CD8-positive, alpha-beta T cell (primary cell): ENCODE measurements at regions of chr2 and their contacts with region 1.

Region 1: GRCh38 chr2:234463626-234464290 is 33.1 kb downstream of the ARL4C start:
- DNase-seq: peak; percentile 58 to 92 (median 75)
- ATAC-seq: peak; percentile 87
- H3K4me3 ChIP-seq: peak overlapping the region; percentile 9 to 36
- H3K4me3 Mint-ChIP-seq: peak overlapping the region; percentile 50
- H3K27ac ChIP-seq: peak overlapping the region; percentile 85 to 94
- H3K27ac Mint-ChIP-seq: peak overlapping the region; percentile 94
- H3K4me1 ChIP-seq: peaks cover 63% of the 10 kb centered on the region
- H3K4me1 Mint-ChIP-seq: peaks cover 67% of the 10 kb centered on the region
- H3K27me3 ChIP-seq: no peaks in the 10 kb centered on the region
- H3K27me3 Mint-ChIP-seq: no peaks in the 10 kb centered on the region
- CTCF ChIP-seq: no peak

Region 2: DNA sequence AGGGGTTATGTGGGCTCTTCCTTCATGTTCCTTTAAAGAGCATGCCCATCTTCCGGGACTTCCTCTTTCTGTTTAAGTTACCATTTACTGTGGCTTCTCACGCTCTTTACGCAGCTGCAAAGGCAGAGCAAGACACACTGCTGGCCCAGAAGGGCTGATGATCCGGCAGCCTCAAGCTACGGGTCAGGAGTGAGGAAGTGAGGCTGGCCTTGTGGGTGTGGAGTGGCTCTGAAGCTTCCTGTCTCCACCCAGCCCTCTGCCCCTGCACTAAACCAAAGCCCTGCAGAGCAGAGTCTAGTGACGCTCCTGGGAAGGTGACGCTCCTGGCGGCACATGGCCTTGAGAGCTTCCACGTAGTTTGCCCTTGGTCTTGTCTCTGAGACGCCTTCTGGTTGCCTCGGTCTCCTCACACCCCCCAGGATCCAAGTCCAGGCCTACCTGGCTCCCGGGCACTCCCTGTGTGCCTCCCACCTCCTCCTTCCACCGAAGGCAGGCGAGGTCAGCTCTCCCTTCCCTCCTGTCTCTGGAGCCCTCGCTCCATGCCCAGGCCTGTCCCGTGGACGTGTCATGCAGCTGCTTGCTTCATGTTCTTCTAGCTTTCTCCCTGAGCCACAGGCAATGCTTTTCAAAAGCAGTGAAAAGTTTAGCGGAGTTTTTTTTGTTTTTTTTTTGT is 17.2 kb before region 1 on chr2:
- CTCF ChIA-PET with region 1: interaction called, 5 read pairs
- POLR2A ChIA-PET with region 1: interaction called, 17 read pairs
- intact Hi-C with region 1: loop called (anchors 1 to 2 kb)
- DNase-seq: peak; percentile 63 to 97 (median 81)
- ATAC-seq: peak; percentile 84
- H3K4me3 ChIP-seq: no peak overlapping the region
- H3K4me3 Mint-ChIP-seq: peak overlapping the region; percentile 70
- H3K27ac ChIP-seq: peak overlapping the region; percentile 90 to 94
- H3K27ac Mint-ChIP-seq: peak overlapping the region; percentile 98
- H3K4me1 ChIP-seq: peaks cover 82% of the 10 kb centered on the region
- H3K4me1 Mint-ChIP-seq: peaks cover 84% of the 10 kb centered on the region
- H3K27me3 ChIP-seq: no peaks in the 10 kb centered on the region
- H3K27me3 Mint-ChIP-seq: no peaks in the 10 kb centered on the region
- CTCF ChIP-seq: no peak

Region 3: GRCh38 chr2:234451852-234452625 is 11.7 kb before region 1 on chr2:
- CTCF ChIA-PET with region 1: interaction called, 14 read pairs
- POLR2A ChIA-PET with region 1: interaction called, 17 read pairs
- intact Hi-C with region 1: loop called (anchors 1 to 2 kb)
- DNase-seq: peak in 2 of 9 experiments; percentile 29 to 55
- ATAC-seq: peak; percentile 14
- H3K4me3 ChIP-seq: peak overlapping the region; percentile 42 to 81
- H3K4me3 Mint-ChIP-seq: peak overlapping the region; percentile 83
- H3K27ac ChIP-seq: peak overlapping the region; percentile 55 to 91
- H3K27ac Mint-ChIP-seq: peak overlapping the region; percentile 91
- H3K4me1 ChIP-seq: peaks cover 73% of the 10 kb centered on the region
- H3K4me1 Mint-ChIP-seq: peaks cover 79% of the 10 kb centered on the region
- H3K27me3 ChIP-seq: no peaks in the 10 kb centered on the region
- H3K27me3 Mint-ChIP-seq: no peaks in the 10 kb centered on the region
- CTCF ChIP-seq: no peak